ENCODE measurements at regions of chr11 and their contacts with region 1.

Region 1: DNA sequence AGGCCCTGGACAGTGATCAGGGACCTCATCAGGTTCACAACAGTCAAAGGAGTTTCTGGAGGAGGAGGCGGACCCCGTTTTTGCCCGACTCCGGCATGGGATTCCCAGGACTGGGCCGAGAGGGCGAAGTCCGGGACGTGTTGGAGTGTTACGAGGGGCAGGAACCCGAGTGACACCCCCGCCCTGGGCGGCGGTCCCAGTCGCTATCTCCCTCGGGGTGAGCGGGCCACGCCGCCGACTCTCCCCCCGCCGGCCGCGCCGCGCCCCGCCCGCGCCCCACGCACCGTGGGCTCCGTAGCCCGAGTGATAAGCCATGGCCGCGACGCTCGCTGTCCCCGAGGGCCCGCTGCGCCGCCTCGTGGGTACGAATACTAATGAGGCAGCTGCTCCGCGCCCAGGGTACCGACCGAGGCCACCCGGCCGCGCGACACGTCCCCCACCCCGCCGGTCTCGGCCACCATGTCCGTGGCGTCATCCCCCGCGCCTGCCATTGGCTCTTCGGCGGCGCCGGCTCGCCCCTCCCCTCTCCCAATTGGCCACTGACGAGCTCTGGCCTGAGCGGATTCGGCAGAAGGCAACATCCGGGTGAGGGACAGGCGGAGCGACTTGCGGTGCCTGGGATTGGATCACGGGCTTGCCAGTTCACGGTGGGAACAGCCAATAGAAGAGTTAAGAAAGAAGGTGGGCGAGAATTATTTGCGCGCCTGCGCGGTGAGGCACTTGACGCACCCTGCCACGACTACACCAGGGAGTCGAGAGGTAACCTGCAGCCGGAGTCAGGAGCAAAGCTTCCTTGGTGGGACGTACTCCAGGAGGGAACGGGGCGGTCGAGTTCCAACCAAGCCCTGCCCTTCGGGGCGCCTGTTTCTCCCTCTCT is at the start of gene YIF1A:
- DNase-seq: peak; percentile 99

Region 2: DNA sequence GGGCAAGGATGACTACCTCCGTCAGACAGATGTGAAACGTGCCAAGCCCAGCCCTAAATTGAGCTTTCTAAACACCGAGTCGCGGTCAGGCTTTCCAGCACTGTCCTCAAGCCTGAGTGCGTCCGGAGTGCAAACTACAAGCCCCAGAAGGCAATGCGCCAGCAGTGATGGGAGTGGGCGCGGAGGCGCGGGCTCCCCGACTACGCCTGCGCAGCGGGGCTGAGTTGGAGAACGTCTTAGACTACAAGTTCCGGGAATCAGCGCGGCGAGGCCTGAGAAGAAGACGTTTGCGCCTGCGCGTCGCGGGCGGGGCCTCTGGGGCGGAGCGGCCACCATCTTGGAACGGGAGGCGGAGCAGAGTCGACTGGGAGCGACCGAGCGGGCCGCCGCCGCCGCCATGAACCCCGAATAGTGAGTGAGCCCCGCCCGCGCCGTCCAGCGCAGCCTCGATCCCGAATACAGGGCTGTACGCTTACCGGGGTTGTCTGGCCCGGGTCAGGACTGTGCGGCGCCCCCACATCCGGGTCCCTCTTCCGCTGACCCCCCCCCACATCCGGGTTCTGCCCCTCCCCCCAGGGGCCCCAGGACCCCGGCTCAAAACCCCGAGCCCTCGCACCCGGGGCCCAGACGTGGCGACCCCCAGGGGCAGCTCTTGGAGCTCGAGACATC is 20.5 kb before region 1 on chr11 and contains the start of gene RAB1B:
- CTCF ChIA-PET with region 1: no interaction called
- POLR2A ChIA-PET with region 1: interaction called, 24 read pairs
- DNase-seq: peak; percentile 99

Region 3: DNA sequence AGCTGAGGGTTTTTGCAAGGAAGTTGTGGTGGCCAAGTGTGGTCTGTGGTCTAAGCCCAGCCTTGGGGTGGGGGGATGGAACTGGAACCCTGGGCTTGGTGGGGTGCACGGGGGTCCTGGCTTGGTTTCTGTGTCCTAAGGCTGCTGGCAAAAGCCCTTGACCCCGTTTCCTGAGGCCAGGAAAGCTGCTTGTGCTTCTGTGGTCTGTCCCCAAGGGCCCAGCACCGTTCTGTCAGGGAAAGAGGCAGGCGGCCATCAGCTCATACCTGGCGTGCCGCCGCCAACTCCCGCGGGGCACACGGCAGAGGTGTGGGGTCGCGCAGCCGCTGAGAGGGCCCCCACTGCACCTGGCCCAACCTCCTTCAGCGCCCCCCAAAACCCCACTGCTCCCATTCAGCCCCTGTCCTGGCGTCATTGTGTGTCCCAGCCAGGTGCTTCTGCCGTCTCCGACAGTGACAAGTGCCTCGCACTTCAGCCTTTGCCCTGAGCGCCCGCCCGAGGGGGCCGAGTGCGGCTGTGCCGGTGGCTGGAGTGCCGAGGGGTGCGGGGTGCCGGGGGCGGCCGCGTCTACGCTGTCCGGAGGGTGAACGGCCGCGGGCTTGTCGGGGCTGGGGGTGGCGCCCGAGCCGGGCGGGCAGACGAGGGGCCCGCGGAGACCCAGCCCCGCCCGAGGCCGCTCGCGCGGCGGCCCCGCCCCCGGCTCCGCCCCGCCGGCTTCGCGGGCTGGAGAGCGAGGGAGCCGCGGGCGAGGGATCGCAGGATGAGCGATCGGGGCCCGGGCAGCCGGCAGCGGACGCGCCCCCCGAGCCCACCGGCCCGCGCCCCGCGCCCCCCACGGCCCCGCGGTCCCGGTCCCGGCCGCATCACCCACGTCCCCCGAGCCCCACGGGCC is 11.2 kb before region 1 on chr11 and contains the start of gene CNIH2:
- CTCF ChIA-PET with region 1: interaction called, 6 read pairs
- POLR2A ChIA-PET with region 1: interaction called, 12 read pairs
- DNase-seq: peak; percentile 71

Region 4: DNA sequence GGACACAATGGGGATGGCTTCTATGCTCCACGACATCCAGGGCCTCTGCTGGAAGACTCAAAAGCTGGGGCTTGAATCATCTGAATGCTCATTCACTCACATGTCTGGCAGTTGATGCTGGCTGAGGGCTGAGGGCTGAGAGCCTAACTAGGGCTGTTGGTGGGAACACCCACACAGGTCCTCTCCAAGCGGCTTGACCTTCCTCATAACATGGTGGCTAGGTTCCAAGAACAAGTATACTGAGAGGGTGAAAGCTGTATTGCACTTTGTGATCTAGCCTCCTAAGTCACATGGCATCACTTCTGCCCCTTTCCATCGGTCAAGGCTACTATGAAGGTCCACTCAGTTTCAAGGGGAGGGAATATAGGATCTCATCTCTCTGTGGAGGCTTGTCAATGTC is 10.3 kb after region 1 on chr11:
- CTCF ChIA-PET with region 1: interaction called, 7 read pairs
- POLR2A ChIA-PET with region 1: interaction called, 18 read pairs
- DNase-seq: no peak

Measured in HEK293T (cell line).